Activated B cell treated with CpG ODN at 0.5 μM for 24 hours (primary cell): ENCODE measurements at regions of chr11 and their contacts with region 1.

Region 1: GRCh38 chr11:130227373-130227772 is 67.8 kb downstream of the ST14 start:
- DNase-seq: no peak
- ATAC-seq: peak; percentile 69
- H3K4me3 Mint-ChIP-seq: no peak overlapping the region
- H3K27ac Mint-ChIP-seq: no peak overlapping the region
- H3K4me1 Mint-ChIP-seq: peaks cover 10% of the 10 kb centered on the region
- H3K27me3 Mint-ChIP-seq: no peaks in the 10 kb centered on the region
- CTCF ChIP-seq: no peak

Region 2: GRCh38 chr11:130261571-130261970 is 34.2 kb after region 1 on chr11:
- CTCF ChIA-PET with region 1: interaction called, 3 read pairs
- POLR2A ChIA-PET with region 1: no interaction called
- intact Hi-C with region 1: loop called (anchors 5 kb)
- DNase-seq: no peak
- ATAC-seq: no peak
- H3K4me3 Mint-ChIP-seq: no peak overlapping the region
- H3K27ac Mint-ChIP-seq: no peak overlapping the region
- H3K4me1 Mint-ChIP-seq: peaks cover 62% of the 10 kb centered on the region
- H3K27me3 Mint-ChIP-seq: no peaks in the 10 kb centered on the region
- CTCF ChIP-seq: no peak

Region 3: DNA sequence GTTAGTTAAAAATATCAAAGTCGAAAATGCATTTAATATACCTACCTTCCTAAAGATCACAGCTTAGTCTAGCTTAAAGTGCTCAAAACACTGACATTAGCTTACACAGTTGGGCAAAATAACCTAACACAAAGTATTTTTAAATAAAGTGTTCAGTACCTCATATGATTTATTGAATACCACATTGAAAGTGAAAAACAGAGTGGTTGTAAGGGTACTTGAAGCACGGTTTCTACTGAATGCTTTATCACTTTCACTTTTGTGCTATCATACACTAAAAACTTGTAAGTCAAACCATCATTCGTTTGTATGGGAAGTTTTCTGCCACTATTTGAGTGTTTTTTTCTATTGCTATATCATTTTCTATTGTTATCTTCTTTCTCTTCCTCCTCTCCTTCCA is 50.8 kb after region 1 on chr11:
- CTCF ChIA-PET with region 1: no interaction called
- POLR2A ChIA-PET with region 1: no interaction called
- intact Hi-C with region 1: no loop called
- DNase-seq: no peak
- ATAC-seq: no peak
- H3K4me3 Mint-ChIP-seq: no peak overlapping the region
- H3K27ac Mint-ChIP-seq: no peak overlapping the region
- H3K4me1 Mint-ChIP-seq: peaks cover 5% of the 10 kb centered on the region
- H3K27me3 Mint-ChIP-seq: no peaks in the 10 kb centered on the region
- CTCF ChIP-seq: no peak

Region 4: DNA sequence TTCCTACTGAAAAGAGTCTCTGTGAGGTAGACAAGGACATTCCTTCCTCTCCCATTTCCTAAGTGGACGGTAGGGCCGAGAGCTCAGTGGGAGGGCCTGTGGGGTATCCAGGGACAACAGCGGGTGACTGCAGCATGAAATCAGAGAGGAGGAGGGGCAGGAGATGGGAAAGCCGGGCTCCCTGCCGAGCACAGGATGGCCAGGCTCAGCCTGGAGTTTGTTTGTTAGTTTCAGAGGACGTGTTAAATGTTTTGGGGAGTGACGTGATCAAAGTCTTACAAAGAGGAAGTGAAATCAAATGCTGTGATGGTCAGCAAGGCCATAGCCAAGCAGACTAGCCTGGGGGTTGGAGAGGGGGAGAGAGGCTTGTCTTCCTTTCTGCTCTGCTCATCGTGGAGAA is 373.8 kb after region 1 on chr11:
- CTCF ChIA-PET with region 1: no interaction called
- POLR2A ChIA-PET with region 1: no interaction called
- intact Hi-C with region 1: no loop called
- DNase-seq: no peak
- ATAC-seq: no peak
- H3K4me3 Mint-ChIP-seq: no peak overlapping the region
- H3K27ac Mint-ChIP-seq: no peak overlapping the region
- H3K4me1 Mint-ChIP-seq: no peaks in the 10 kb centered on the region
- H3K27me3 Mint-ChIP-seq: peaks cover 2% of the 10 kb centered on the region
- CTCF ChIP-seq: no peak